T-cell (primary cell): ENCODE measurements at regions of chrX and their contacts with region 1.

Region 1: DNA sequence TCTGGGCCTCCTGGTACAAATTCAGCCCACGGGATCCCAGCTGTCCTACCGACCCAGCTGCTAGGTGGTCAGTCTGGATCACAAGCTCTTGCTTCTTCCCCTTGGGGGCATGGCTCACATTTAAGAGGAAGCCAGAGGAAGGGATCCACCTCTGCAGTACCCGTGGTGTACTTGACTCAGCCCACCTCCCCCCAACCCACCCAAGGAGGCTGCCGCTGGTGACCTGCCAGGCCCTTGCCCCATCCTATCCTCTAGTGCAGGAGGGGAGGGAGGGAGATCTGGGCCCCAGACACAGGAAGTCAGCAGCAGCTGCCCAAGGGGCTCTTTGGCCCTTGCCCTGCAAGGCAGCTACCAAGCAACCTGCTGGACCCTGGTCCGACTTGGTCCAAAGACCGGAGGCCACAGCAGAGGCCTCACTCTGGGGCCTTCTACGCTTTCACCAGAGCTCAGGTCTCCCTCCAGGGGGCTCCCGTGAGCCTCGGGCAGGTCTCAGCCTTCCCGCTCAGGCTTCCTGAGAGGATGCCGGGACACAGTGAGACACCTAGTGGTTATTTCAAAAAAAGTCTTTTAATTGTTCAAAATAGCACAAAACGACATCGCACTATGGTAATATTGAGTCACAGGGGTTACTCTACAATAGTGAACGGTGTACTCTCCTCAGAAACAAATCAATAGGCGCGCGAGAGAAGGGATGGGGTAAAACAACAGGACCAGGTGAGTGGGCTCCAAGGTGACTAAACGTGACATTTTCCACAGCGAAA is 2.7 kb upstream of the RENBP start:
- DNase-seq: peak; percentile 49 to 85 (median 70)
- ATAC-seq: peak; percentile 79 to 85 (median 82)
- H3K4me3 ChIP-seq: no peak overlapping the region
- H3K4me3 Mint-ChIP-seq: peak overlapping the region in 1 of 3 donors; percentile 52
- H3K27ac ChIP-seq: no peak overlapping the region
- H3K27ac Mint-ChIP-seq: peak overlapping the region; percentile 71 to 90
- H3K4me1 ChIP-seq: peaks cover 5 to 63% of the 10 kb centered on the region in 2 experiments
- H3K4me1 Mint-ChIP-seq: peaks cover 19 to 23% (median 20%) of the 10 kb centered on the region in 3 donors
- H3K27me3 ChIP-seq: no peaks in the 10 kb centered on the region
- H3K27me3 Mint-ChIP-seq: no peaks in the 10 kb centered on the region

Region 2: DNA sequence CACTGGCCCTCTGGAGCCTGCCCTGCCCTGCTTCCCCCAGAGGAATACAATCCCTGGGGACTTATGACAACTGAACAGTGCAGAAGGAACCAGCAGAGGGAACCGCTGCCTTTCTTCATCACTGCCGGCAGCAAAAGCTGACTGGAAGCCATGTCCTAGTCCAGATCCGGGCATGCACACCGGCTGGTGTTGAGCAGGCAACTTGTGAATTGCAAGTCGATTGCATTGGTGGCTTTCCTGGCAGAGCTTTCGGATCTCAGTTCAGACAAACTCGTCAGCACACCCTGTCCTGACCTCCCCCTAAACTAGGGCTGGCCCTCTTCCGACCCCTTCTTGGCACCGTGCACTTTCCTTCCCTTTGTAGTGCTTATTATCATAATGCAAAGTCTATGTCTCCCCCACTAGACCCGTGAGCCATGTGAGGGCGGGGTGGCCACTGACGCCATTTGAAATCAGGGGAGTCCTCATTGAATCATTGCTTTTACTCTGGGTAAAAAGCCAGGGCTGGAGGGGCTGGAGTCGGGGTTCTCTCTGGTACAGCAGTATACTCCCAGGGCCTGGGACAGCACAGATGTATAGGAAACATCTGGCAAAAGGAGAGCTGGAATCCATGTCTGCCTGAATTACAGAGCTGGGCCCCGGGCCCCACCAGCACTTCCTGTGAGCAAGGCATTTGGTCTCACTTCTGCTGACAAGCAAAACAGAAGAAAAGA is 22.9 kb before region 1 on chrX:
- CTCF ChIA-PET with region 1: interaction called, 22 to 36 read pairs
- POLR2A ChIA-PET with region 1: interaction called, 3 to 8 read pairs
- DNase-seq: peak in 34 of 35 experiments; percentile 25 to 72 (median 46)
- ATAC-seq: no peak
- H3K4me3 ChIP-seq: peak overlapping the region; percentile 77 to 82
- H3K4me3 Mint-ChIP-seq: peak overlapping the region; percentile 86 to 95 (median 94)
- H3K27ac ChIP-seq: peak overlapping the region; percentile 72
- H3K27ac Mint-ChIP-seq: peak overlapping the region; percentile 95 to 98
- H3K4me1 ChIP-seq: peaks cover 5 to 74% of the 10 kb centered on the region in 2 experiments
- H3K4me1 Mint-ChIP-seq: peaks cover 49 to 63% (median 59%) of the 10 kb centered on the region in 3 donors
- H3K27me3 ChIP-seq: no peaks in the 10 kb centered on the region
- H3K27me3 Mint-ChIP-seq: peaks cover 0 to 8% of the 10 kb centered on the region in 2 donors

Region 3: GRCh38 chrX:155115174-155115819 is 1168.1 kb after region 1 on chrX:
- CTCF ChIA-PET with region 1: no interaction called
- POLR2A ChIA-PET with region 1: no interaction called
- DNase-seq: no peak
- ATAC-seq: no peak
- H3K4me3 ChIP-seq: no peak overlapping the region
- H3K4me3 Mint-ChIP-seq: no peak overlapping the region
- H3K27ac ChIP-seq: no peak overlapping the region
- H3K27ac Mint-ChIP-seq: no peak overlapping the region
- H3K4me1 ChIP-seq: no peaks in the 10 kb centered on the region
- H3K4me1 Mint-ChIP-seq: no peaks in the 10 kb centered on the region
- H3K27me3 ChIP-seq: no peaks in the 10 kb centered on the region
- H3K27me3 Mint-ChIP-seq: peaks cover 0 to 7% of the 10 kb centered on the region in 2 donors